CD8-positive, alpha-beta T cell (primary cell): ENCODE measurements at regions of chr11 and their contacts with region 1.

Region 1: GRCh38 chr11:45102810-45103621 is 43.4 kb upstream of the PRDM11 start:
- DNase-seq: peak; percentile 25 to 87 (median 66)
- ATAC-seq: peak; percentile 92
- H3K4me3 ChIP-seq: peak overlapping the region in 1 of 2 experiments; percentile 37
- H3K4me3 Mint-ChIP-seq: peak overlapping the region; percentile 70
- H3K27ac ChIP-seq: peak overlapping the region in 1 of 2 experiments; percentile 64
- H3K27ac Mint-ChIP-seq: no peak overlapping the region
- H3K4me1 ChIP-seq: peaks cover 14% of the 10 kb centered on the region
- H3K4me1 Mint-ChIP-seq: peaks cover 11% of the 10 kb centered on the region
- H3K27me3 ChIP-seq: no peaks in the 10 kb centered on the region
- H3K27me3 Mint-ChIP-seq: peaks cover 12% of the 10 kb centered on the region
- CTCF ChIP-seq: peak; percentile 94

Region 2: DNA sequence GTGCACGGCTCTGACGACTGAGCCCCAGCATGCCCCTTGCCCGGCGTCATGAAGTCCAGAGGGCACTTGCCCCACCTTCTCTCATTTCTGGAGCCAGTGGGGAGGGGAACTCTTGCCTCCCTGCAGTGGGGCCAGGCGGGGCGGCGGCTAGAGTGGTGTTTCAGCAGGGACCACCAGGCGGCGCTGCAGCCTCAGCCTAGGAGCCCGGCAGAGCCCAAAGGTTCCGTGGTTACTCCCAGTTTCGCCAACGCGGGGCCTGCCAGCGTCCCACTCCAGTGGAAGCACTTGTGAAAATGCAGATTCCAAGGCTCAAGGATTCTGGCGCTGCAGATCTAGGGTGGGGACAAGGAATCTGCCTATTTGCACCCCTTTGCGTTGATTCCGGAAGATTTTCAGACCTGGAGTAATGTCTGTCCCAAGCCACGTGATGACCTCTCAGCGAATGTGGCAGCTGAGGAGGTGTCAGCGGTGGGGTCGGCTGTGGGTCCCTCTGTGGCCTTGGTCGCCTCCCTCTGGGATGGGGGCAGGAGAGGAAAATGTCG is 481.8 kb before region 1 on chr11:
- CTCF ChIA-PET with region 1: no interaction called
- POLR2A ChIA-PET with region 1: no interaction called
- intact Hi-C with region 1: loop called in 1 of 2 experiments (anchors 10 kb)
- DNase-seq: peak; percentile 26 to 69 (median 51)
- ATAC-seq: peak; percentile 60
- H3K4me3 ChIP-seq: no peak overlapping the region
- H3K4me3 Mint-ChIP-seq: no peak overlapping the region
- H3K27ac ChIP-seq: no peak overlapping the region
- H3K27ac Mint-ChIP-seq: no peak overlapping the region
- H3K4me1 ChIP-seq: peaks cover 18% of the 10 kb centered on the region
- H3K4me1 Mint-ChIP-seq: peaks cover 15% of the 10 kb centered on the region
- H3K27me3 ChIP-seq: no peaks in the 10 kb centered on the region
- H3K27me3 Mint-ChIP-seq: no peaks in the 10 kb centered on the region
- CTCF ChIP-seq: peak; percentile 56

Region 3: GRCh38 chr11:44927174-44927661 is 175.8 kb before region 1 on chr11:
- CTCF ChIA-PET with region 1: interaction called, 1,504 read pairs
- POLR2A ChIA-PET with region 1: interaction called, 14 read pairs
- intact Hi-C with region 1: loop called (anchors 1 to 2 kb)
- DNase-seq: peak; percentile 24 to 77 (median 59)
- ATAC-seq: peak; percentile 52
- H3K4me3 ChIP-seq: no peak overlapping the region
- H3K4me3 Mint-ChIP-seq: no peak overlapping the region
- H3K27ac ChIP-seq: no peak overlapping the region
- H3K27ac Mint-ChIP-seq: no peak overlapping the region
- H3K4me1 ChIP-seq: no peaks in the 10 kb centered on the region
- H3K4me1 Mint-ChIP-seq: no peaks in the 10 kb centered on the region
- H3K27me3 ChIP-seq: peaks cover 0 to 2% of the 10 kb centered on the region in 2 experiments
- H3K27me3 Mint-ChIP-seq: no peaks in the 10 kb centered on the region
- CTCF ChIP-seq: peak; percentile 79

Region 4: DNA sequence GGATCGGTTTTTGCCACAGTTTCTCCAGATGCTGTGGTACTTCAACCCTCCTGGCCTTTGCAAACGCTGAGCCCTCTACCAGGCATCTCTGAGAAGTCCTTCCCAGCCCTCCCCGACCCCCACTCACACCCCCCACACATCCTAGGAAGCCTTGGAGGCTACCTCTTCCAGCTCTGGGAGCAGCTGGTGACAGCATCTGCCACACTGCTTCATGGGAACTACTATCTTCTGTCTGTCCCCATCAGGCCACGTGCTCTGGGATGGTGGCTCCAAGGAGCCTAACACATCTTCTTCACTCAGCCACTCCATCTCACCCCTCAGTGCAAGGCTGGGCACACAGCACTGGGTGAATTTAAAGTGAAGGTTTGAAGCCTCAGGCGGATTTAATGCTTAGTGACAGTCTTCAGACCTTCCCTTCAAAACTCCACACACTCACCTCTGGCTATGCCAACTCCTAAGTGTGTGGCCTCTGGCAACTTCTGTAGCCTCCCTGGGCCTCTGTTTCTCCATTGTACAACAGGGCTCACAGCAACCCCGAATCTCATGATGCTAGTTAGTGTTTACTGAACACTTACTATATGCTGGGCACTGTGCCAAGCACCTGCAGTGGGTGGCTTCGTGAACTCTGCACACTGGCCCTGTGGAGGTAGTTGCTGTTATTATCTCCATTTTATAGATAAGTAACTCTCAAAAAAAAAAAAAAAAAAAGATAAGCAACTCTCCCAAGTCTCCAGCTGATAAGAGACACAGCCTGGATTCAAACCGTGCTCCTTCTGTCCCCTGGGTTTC is 145.0 kb before region 1 on chr11:
- CTCF ChIA-PET with region 1: interaction called, 33 read pairs
- POLR2A ChIA-PET with region 1: no interaction called
- intact Hi-C with region 1: no loop called
- DNase-seq: no peak
- ATAC-seq: no peak
- H3K4me3 ChIP-seq: no peak overlapping the region
- H3K4me3 Mint-ChIP-seq: no peak overlapping the region
- H3K27ac ChIP-seq: no peak overlapping the region
- H3K27ac Mint-ChIP-seq: no peak overlapping the region
- H3K4me1 ChIP-seq: no peaks in the 10 kb centered on the region
- H3K4me1 Mint-ChIP-seq: no peaks in the 10 kb centered on the region
- H3K27me3 ChIP-seq: no peaks in the 10 kb centered on the region
- H3K27me3 Mint-ChIP-seq: no peaks in the 10 kb centered on the region
- CTCF ChIP-seq: no peak

Region 5: DNA sequence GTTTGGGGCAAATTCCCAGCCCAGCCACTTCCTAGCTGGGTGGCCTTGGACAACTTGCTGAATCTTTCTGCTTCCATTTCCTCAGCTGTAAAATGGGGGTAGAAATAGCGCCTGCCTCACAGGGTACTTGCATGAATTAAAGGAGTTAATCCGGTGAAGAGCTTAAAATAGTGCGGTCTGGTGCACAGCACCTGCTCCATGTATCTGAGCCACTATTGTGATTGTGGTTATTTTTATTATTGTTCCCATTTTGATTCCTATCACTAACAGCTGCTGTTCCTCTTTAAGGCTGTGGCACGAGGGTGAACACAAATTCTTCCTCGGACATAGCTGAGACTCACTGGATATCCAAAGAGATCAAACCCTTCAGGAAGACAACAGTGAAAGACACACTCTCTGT is 105.5 kb before region 1 on chr11:
- CTCF ChIA-PET with region 1: interaction called, 20 read pairs
- POLR2A ChIA-PET with region 1: no interaction called
- intact Hi-C with region 1: no loop called
- DNase-seq: no peak
- ATAC-seq: no peak
- H3K4me3 ChIP-seq: no peak overlapping the region
- H3K4me3 Mint-ChIP-seq: no peak overlapping the region
- H3K27ac ChIP-seq: no peak overlapping the region
- H3K27ac Mint-ChIP-seq: no peak overlapping the region
- H3K4me1 ChIP-seq: no peaks in the 10 kb centered on the region
- H3K4me1 Mint-ChIP-seq: peaks cover 1% of the 10 kb centered on the region
- H3K27me3 ChIP-seq: no peaks in the 10 kb centered on the region
- H3K27me3 Mint-ChIP-seq: no peaks in the 10 kb centered on the region
- CTCF ChIP-seq: no peak

Region 6: GRCh38 chr11:45073685-45074141 is 29.3 kb before region 1 on chr11:
- CTCF ChIA-PET with region 1: interaction called, 40 read pairs
- POLR2A ChIA-PET with region 1: no interaction called
- intact Hi-C with region 1: no loop called
- DNase-seq: peak in 6 of 9 experiments; percentile 22 to 71 (median 32)
- ATAC-seq: peak; percentile 84
- H3K4me3 ChIP-seq: no peak overlapping the region
- H3K4me3 Mint-ChIP-seq: no peak overlapping the region
- H3K27ac ChIP-seq: no peak overlapping the region
- H3K27ac Mint-ChIP-seq: peak overlapping the region; percentile 46
- H3K4me1 ChIP-seq: peaks cover 16% of the 10 kb centered on the region
- H3K4me1 Mint-ChIP-seq: peaks cover 20% of the 10 kb centered on the region
- H3K27me3 ChIP-seq: no peaks in the 10 kb centered on the region
- H3K27me3 Mint-ChIP-seq: no peaks in the 10 kb centered on the region
- CTCF ChIP-seq: no peak

Region 7: GRCh38 chr11:45238724-45239123 is 135.7 kb after region 1 on chr11:
- CTCF ChIA-PET with region 1: no interaction called
- POLR2A ChIA-PET with region 1: no interaction called
- intact Hi-C with region 1: no loop called
- DNase-seq: no peak
- ATAC-seq: no peak
- H3K4me3 ChIP-seq: no peak overlapping the region
- H3K4me3 Mint-ChIP-seq: no peak overlapping the region
- H3K27ac ChIP-seq: no peak overlapping the region
- H3K27ac Mint-ChIP-seq: no peak overlapping the region
- H3K4me1 ChIP-seq: no peaks in the 10 kb centered on the region
- H3K4me1 Mint-ChIP-seq: no peaks in the 10 kb centered on the region
- H3K27me3 ChIP-seq: no peaks in the 10 kb centered on the region
- H3K27me3 Mint-ChIP-seq: peaks cover 15% of the 10 kb centered on the region
- CTCF ChIP-seq: no peak

Region 8: DNA sequence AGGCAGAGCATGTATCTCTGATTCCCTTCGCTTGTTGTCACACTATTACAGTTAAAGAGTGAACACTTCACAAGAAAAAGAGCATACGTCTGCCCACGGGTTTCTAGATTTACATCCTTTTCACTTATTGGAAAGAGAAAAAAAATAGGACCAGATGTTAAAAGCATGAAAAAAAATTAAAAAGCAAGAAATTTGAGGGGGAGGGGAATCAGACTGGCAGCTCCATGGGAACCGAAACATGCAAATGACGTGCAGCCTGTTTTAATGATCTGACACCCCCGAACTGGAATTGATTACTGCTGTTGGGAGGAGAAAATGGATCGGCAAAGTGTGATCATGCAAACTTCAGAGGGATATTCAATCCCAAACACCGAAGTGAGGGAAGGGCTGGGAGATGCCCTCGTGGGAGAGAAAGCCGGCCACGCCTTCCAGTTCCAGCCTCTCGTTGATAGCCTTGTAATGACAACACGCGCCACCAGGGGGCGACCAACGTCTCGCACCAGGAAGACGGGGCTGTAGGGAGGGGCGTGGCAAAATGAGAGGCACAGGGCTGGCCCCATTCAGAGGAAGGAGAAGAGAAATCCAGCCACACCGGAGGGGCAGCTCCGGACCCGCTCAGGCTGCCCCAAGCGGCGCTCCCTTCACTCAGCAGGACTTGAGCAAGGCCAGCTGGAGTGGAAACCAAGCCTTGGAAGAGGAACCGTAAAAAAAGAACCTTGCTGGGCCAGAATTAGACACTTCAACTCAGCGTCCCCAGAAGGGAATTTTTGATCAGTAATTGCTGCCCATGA is 236.9 kb after region 1 on chr11:
- CTCF ChIA-PET with region 1: interaction called, 425 read pairs
- POLR2A ChIA-PET with region 1: no interaction called
- intact Hi-C with region 1: no loop called
- DNase-seq: peak; percentile 81 to 96 (median 92)
- ATAC-seq: peak; percentile 100
- H3K4me3 ChIP-seq: peak overlapping the region in 1 of 2 experiments; percentile 27
- H3K4me3 Mint-ChIP-seq: peak overlapping the region; percentile 60
- H3K27ac ChIP-seq: no peak overlapping the region
- H3K27ac Mint-ChIP-seq: no peak overlapping the region
- H3K4me1 ChIP-seq: peaks cover 8% of the 10 kb centered on the region
- H3K4me1 Mint-ChIP-seq: peaks cover 10% of the 10 kb centered on the region
- H3K27me3 ChIP-seq: peaks cover 0 to 4% of the 10 kb centered on the region in 2 experiments
- H3K27me3 Mint-ChIP-seq: peaks cover 10% of the 10 kb centered on the region
- CTCF ChIP-seq: peak; percentile 87

Region 9: DNA sequence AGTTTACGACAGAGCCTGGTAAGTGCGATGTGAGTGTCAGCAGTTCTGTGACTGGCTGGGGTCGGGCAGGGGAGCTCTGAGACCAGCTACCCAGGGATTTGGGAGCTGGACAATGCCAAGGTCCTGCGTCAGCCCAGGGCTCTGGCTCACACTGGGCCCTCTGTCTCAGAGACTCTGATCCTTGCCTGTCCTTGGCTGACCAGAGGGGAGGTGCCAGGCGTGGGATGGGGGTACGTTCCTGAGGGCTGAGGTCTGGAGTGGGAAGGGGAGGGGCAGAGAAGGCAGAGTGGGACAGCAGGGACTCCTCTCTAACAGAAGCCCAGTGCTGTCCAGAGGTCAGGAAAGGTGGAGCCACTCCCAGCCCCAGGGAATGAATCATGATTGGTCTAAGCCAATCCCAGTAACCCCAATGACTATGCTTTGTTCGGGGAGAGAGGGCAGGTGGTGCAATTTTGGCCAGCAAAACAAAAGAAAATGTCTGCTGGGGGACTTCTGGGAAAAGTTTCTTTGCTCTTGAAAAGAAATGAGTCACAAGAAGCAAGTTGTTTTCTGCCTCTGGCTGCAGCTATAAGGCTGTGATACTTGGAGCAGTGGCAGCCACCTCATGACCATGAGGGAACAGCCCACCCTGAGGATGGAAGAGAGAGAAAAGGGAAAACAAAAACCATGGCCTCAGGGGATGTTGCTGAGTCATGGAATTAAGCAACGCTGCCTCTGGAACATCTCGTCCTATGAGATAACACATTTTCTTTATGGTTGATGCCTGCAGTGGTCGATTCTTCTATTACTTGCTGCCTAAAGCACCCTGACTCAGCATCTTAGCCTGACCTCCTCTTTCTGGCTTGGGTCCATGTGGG is 454.1 kb after region 1 on chr11:
- CTCF ChIA-PET with region 1: no interaction called
- POLR2A ChIA-PET with region 1: no interaction called
- intact Hi-C with region 1: no loop called
- DNase-seq: no peak
- ATAC-seq: no peak
- H3K4me3 ChIP-seq: no peak overlapping the region
- H3K4me3 Mint-ChIP-seq: no peak overlapping the region
- H3K27ac ChIP-seq: no peak overlapping the region
- H3K27ac Mint-ChIP-seq: no peak overlapping the region
- H3K4me1 ChIP-seq: no peaks in the 10 kb centered on the region
- H3K4me1 Mint-ChIP-seq: no peaks in the 10 kb centered on the region
- H3K27me3 ChIP-seq: no peaks in the 10 kb centered on the region
- H3K27me3 Mint-ChIP-seq: peaks cover 6% of the 10 kb centered on the region
- CTCF ChIP-seq: no peak

Region 10: DNA sequence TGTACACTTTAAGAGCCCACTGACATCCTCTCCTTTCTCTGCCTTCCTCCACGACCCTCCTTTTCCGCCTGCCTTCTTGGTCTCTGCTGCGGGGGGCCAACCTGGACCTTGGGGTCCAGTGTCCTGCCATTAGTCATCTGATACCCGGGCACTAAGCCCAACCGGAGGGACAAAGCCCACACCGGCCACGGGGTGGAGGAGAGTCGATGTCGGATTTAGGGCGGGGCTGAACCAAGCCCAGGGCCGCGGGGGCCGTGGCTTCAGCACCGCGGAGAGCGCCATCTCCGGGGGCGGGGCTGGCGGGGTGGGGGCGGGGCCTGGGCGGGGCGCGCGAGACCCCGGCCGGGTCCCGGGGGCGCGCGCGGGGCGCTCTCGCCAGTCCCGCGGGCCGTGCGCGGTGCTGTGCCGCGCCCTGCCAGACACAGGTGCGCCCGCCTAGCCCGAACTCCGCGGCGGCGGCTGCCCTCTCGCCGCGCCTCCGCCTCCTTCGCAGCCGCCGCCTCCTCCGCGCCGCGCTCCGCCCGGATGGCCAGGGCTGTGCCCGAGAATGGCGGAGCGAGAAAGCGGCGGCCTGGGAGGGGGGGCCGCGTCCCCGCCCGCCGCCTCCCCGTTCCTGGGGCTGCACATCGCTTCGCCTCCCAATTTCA is 782.4 kb after region 1 on chr11 and contains the start of gene MAPK8IP1:
- CTCF ChIA-PET with region 1: no interaction called
- POLR2A ChIA-PET with region 1: no interaction called
- intact Hi-C with region 1: no loop called
- DNase-seq: peak; percentile 14 to 76 (median 52)
- ATAC-seq: peak; percentile 85
- H3K4me3 ChIP-seq: peak within 1 kb of the TSS in 1 of 2 experiments; percentile 24
- H3K4me3 Mint-ChIP-seq: peak within 1 kb of the TSS; percentile 61
- H3K27ac ChIP-seq: no peak within 1 kb of the TSS
- H3K27ac Mint-ChIP-seq: no peak within 1 kb of the TSS
- H3K4me1 ChIP-seq: peaks cover 5% of the 10 kb centered on the region
- H3K4me1 Mint-ChIP-seq: peaks cover 10% of the 10 kb centered on the region
- H3K27me3 ChIP-seq: peaks cover 0 to 9% of the 10 kb centered on the region in 2 experiments
- H3K27me3 Mint-ChIP-seq: peaks cover 2% of the 10 kb centered on the region
- CTCF ChIP-seq: no peak
- total RNA-seq, gene MAPK8IP1: 6.5 to 8.4 TPM